Activated T-helper 2 cell treated with anti-CD3 and anti-CD28 coated beads, Interferon-gamma antibody, Interleukin-2, Interleukin-4, amounts not matched to agents 10 μg/mL and 5 μg/mL and 100 μg/mL, durations not matched to agents 14 hours and 24 hours and 36 hours (primary cell): ENCODE measurements at regions of chr3 and their contacts with region 1.

Region 1: GRCh38 chr3:169812332-169813235 is at the starts of genes LRRC34 and LRRIQ4:
- DNase-seq: peak; percentile 66
- H3K4me3 Mint-ChIP-seq: peak within 1 kb of the TSS; percentile 87
- H3K27ac Mint-ChIP-seq: peak within 1 kb of the TSS; percentile 95
- H3K4me1 Mint-ChIP-seq: peaks cover 37% of the 10 kb centered on the region
- H3K27me3 Mint-ChIP-seq: peaks cover 15% of the 10 kb centered on the region
- total RNA-seq, gene LRRC34: 5.6 and 5.9 TPM in 2 replicates
- total RNA-seq, gene LRRIQ4: 0.16 TPM in 2 replicates

Region 2: DNA sequence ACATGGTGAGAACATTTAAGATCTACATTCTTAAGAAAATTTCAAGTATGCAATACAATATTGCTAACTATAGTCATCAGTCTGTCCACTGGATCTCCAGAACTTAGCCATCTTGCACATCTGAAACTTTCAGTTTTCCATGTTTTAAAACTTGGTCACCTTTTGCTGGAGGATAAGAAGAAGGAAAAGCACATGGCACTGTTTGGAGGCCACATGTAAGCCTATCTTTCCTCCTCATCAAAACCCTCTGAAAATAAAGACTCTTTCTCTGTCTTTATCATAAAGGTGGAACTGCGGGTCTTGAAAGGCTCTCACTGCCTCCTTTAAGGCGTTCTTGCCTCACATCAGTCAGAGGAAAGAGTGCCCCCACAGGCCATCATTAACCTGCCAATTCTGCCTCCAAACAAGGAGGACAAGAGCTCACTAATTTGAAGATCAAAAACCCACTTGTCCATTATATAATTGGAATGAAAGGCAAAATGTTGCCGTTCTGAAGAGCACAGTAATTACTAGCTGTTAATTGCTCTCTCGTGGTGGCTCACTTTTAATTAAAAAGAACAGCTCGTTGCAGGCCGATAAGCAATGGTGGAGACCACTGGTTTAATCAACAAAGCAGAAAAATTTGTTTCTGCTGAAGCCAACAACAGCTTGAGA is 306.9 kb before region 1 on chr3:
- intact Hi-C with region 1: no loop called
- DNase-seq: no peak
- H3K4me3 Mint-ChIP-seq: no peak overlapping the region
- H3K27ac Mint-ChIP-seq: no peak overlapping the region
- H3K4me1 Mint-ChIP-seq: peaks cover 11% of the 10 kb centered on the region
- H3K27me3 Mint-ChIP-seq: peaks cover 3% of the 10 kb centered on the region

Region 3: DNA sequence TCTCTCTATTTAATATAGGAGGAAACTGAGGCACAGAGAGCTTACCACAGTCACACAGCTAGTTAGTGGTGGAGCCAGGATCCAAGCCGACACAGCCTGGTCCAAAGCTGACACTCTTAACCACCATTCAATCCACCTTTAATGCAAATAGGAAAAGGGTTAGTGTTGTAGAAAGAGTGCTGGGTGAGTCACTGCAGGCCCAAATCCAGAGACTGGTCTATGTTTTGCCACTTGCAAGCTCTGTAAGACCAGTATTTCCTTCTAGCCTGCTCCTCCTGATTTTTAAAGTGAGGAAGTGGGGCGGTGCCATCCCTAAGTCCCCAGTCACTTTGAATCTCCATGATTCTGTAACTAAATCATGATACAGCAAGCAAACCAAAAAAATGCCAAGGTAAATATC is 260.1 kb before region 1 on chr3:
- intact Hi-C with region 1: no loop called
- DNase-seq: no peak
- H3K4me3 Mint-ChIP-seq: no peak overlapping the region
- H3K27ac Mint-ChIP-seq: no peak overlapping the region
- H3K4me1 Mint-ChIP-seq: no peaks in the 10 kb centered on the region
- H3K27me3 Mint-ChIP-seq: no peaks in the 10 kb centered on the region

Region 4: GRCh38 chr3:169863458-169863899 is 50.9 kb after region 1 on chr3:
- intact Hi-C with region 1: loop called (anchors 5 kb)
- DNase-seq: peak; percentile 60
- H3K4me3 Mint-ChIP-seq: no peak overlapping the region
- H3K27ac Mint-ChIP-seq: no peak overlapping the region
- H3K4me1 Mint-ChIP-seq: peaks cover 11% of the 10 kb centered on the region
- H3K27me3 Mint-ChIP-seq: peaks cover 25% of the 10 kb centered on the region